K562 (cell line): ENCODE measurements at regions of chr10 and their contacts with region 1.

Region 1: GRCh38 chr10:68848793-68849192 is 21.5 kb downstream of the STOX1 start:
- DNase-seq: no peak
- ATAC-seq: peak; percentile 14; the same call in 1 of the 3 replicates
- H3K4me3 ChIP-seq: no peak overlapping the region
- H3K27ac ChIP-seq: no peak overlapping the region
- H3K4me1 ChIP-seq: no peaks in the 10 kb centered on the region
- H3K27me3 ChIP-seq: no peaks in the 10 kb centered on the region
- CTCF ChIP-seq: no peak
- EP300 ChIP-seq: no peak
- POLR2A ChIP-seq: no peak
- RAD21 ChIP-seq: no peak

Region 2: GRCh38 chr10:68684413-68684812 is 164.4 kb before region 1 on chr10:
- CTCF ChIA-PET with region 1: no interaction called
- POLR2A ChIA-PET with region 1: no interaction called
- in situ Hi-C with region 1: no loop called
- intact Hi-C with region 1: no loop called
- DNase-seq: no peak
- ATAC-seq: no peak
- H3K4me3 ChIP-seq: no peak overlapping the region
- H3K27ac ChIP-seq: no peak overlapping the region
- H3K4me1 ChIP-seq: no peaks in the 10 kb centered on the region
- H3K27me3 ChIP-seq: no peaks in the 10 kb centered on the region
- CTCF ChIP-seq: no peak
- EP300 ChIP-seq: no peak
- POLR2A ChIP-seq: no peak
- RAD21 ChIP-seq: no peak

Region 3: GRCh38 chr10:68837608-68838322 is 11.0 kb before region 1 on chr10:
- CTCF ChIA-PET with region 1: no interaction called
- POLR2A ChIA-PET with region 1: interaction called, 10 read pairs
- in situ Hi-C with region 1: no loop called
- intact Hi-C with region 1: no loop called
- DNase-seq: peak in 2 of 4 experiments; percentile 4 to 8
- ATAC-seq: no peak
- H3K4me3 ChIP-seq: no peak overlapping the region
- H3K27ac ChIP-seq: no peak overlapping the region
- H3K4me1 ChIP-seq: no peaks in the 10 kb centered on the region
- H3K27me3 ChIP-seq: peaks cover 21 to 24% of the 10 kb centered on the region in 2 experiments
- CTCF ChIP-seq: no peak
- EP300 ChIP-seq: no peak
- POLR2A ChIP-seq: no peak
- RAD21 ChIP-seq: no peak